Heart left ventricle (tissue), 16 donors: ENCODE measurements at regions of chr13 and their contacts with region 1.

Region 1: GRCh38 chr13:26855921-26856320 is 95.3 kb upstream of the GPR12 start:
- DNase-seq: no peak
- ATAC-seq: no peak
- H3K4me3 ChIP-seq: no peak overlapping the region
- H3K27ac ChIP-seq: no peak overlapping the region
- H3K4me1 ChIP-seq: no peaks in the 10 kb centered on the region
- H3K27me3 ChIP-seq: peaks cover 0 to 54% (median 10%) of the 10 kb centered on the region in 9 donors
- CTCF ChIP-seq: no peak
- POLR2A ChIP-seq: no peak

Region 2: DNA sequence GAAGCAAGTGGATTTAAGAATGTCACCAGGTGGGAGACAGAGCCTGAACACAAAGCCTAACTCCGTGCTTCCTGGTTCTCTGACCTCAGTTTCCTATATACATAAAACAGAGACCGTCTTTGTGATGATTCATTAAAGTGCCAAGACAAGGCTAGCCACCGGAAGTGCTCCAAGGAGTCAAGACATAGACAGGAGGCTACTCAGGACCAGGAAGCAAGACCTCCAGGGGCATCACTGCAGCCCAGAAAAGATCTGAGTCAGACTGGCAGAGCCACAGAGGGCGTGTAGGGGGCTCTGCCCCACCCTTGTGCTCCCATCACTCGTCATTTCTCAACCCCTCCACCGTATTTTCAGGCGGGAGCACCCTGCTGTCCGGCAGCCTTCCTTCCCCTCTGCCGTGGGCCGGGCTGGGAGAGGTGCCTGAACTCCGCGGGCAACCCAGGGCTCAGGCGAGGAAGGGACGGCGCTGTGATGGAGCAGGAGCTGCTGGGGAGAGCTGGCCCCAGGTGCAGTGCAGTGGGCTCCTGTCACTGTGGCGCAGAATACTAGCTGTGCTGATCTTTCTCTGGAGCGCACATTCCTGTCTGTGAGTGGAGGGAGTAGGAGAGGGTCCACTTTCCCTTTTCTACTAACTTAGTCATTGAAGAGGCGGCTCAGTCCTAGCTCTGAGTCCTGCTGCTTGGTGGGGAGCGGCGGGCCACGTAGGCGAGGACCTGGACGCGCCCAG is 39.3 kb after region 1 on chr13:
- intact Hi-C with region 1: loop called in 1 of 10 experiments (anchors 5 kb)
- DNase-seq: no peak
- ATAC-seq: peak in 1 of 4 donors; percentile 22
- H3K4me3 ChIP-seq: no peak overlapping the region
- H3K27ac ChIP-seq: no peak overlapping the region
- H3K4me1 ChIP-seq: no peaks in the 10 kb centered on the region
- H3K27me3 ChIP-seq: peaks cover 0 to 46% (median 6%) of the 10 kb centered on the region in 9 donors
- CTCF ChIP-seq: no peak
- POLR2A ChIP-seq: no peak